Right lobe of liver (tissue), 6 donors: ENCODE measurements at regions of chr12 and their contacts with region 1.

Region 1: DNA sequence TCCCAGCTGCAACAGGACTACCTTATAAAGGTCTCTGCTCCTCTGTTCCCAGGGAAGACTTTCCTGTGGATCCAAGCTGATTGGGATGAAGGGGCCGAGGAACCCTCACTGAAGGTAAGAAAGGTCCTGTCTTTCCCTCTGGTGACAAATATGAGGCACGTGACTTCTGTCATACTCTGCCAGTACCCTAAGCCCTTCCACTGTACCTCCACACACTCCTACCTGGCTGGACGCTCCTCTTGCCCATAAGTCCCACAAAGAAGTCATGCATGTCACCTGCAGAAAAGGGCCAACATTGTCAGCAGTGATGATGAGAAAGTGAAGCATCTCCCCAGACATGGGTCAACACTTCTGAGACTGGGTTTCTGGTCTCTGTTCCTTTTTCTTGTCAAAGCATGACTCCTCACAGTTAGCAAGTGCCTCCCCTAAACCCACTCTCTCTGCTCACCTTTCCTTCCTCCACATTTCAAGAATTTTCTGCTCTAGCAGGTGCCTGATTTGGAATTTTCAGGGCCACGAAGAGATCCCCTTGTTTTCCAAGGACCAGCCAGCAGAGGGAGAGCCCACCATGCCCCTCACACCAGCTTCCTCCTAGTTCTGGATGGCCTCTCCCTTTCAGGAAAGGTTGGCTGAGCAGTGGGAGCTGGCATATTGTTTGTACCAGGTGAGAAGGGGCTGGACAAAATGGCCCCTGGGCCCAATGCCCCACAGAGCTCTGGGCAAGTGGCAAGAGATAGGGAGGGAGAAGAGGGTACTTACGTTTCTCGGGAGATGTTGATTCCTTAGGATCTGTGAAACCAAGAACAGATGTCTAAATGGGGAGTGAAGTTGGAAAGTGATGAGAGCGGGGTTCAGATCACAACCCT is 3.5 kb downstream of the TAC3 start:
- DNase-seq: no peak
- ATAC-seq: no peak
- H3K4me3 ChIP-seq: no peak overlapping the region
- H3K27ac ChIP-seq: no peak overlapping the region
- H3K4me1 ChIP-seq: peaks cover 0 to 9% (median 0%) of the 10 kb centered on the region in 4 donors
- H3K27me3 ChIP-seq: no peaks in the 10 kb centered on the region
- CTCF ChIP-seq: no peak
- POLR2A ChIP-seq: no peak

Region 2: DNA sequence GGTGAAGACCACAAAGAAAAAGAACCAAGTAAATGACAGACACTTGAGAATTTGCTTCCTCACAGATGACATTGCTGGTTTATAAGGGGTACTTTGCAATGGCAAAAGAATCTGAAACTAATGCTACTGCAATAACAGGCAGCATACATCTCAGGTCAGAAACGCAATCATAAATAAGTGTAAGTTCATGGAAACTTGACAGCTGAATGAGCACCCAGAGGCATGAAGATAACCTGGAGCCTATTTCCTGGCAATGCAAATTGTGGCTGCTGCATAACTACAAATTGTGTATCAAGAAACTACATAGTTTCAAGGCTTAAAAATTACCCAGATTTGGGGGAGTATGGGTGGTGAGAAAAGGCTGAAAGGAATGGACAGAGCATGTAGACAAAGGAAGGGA is 45.6 kb after region 1 on chr12:
- intact Hi-C with region 1: loop called in 1 of 2 experiments (anchors 5 kb)
- DNase-seq: no peak
- ATAC-seq: no peak
- H3K4me3 ChIP-seq: no peak overlapping the region
- H3K27ac ChIP-seq: no peak overlapping the region
- H3K4me1 ChIP-seq: no peaks in the 10 kb centered on the region
- H3K27me3 ChIP-seq: no peaks in the 10 kb centered on the region
- CTCF ChIP-seq: no peak
- POLR2A ChIP-seq: no peak

Region 3: DNA sequence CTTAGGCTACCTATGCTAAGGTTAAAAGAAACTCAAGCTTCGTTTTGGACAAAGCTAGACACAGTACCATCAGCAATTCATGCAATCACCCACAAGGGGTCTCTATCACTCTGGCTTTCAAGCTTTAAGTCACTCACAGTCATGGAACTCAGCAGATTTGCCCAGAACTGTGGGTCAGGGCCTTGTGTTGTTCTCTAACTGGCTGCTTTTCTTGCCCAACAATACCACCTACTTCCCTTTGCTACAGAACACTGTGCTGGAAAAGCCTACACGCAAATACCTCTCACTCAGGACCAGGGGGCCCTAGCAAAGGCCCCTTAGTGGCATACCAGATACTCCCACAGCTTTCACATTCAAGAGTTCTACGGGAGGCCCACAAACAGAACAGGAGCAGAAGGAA is 56.7 kb after region 1 on chr12:
- intact Hi-C with region 1: loop called in 1 of 2 experiments (anchors 5 kb)
- DNase-seq: peak in 2 of 3 donors; percentile 37 to 75
- ATAC-seq: peak; percentile 98 to 99 (median 98)
- H3K4me3 ChIP-seq: no peak overlapping the region
- H3K27ac ChIP-seq: peak overlapping the region; percentile 52 to 70 (median 70)
- H3K4me1 ChIP-seq: peaks cover 0 to 9% (median 0%) of the 10 kb centered on the region in 4 donors
- H3K27me3 ChIP-seq: no peaks in the 10 kb centered on the region
- CTCF ChIP-seq: peak; percentile 87 to 97 (median 93)
- POLR2A ChIP-seq: no peak

Region 4: DNA sequence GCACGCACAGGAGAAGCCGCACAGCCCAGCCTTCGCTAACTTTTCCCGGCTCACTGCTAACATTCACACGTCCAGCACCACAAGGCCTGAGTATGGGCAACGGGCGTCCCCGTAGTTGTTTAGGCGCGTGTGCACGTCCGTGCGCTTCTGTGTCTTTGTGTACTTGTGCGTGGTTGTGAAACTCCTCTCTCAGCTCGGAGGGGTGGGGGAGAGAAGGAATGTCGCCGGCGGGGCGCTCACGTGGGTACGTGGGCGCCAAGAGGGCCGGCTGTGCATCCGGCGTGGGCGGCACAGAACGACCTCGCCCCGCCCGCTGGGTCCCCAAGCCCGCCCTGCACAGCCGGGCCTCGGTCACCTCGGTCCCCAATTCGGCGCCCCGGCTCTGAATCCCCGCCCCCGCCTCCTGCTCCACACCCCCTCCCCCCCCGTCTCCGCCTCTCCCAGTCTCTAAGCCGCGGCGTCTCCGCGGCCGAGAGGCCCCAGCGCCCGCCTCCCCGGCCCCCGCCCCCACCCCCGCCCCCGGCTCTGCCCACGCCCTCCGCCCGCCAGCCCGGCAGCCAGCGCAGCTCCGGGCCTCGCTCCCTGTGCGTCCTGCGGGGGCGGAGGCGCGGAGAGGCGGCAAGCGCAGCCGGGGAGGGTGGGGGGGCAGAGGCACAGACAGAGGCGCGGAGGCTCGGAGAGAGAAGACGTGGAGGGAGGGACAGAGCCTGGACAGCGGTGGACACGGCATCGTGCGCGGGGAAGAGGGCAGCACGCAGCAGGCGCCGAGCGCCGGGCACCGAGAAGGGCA is 75.8 kb after region 1 on chr12 and contains the start of gene NAB2:
- intact Hi-C with region 1: no loop called
- DNase-seq: peak; percentile 98 to 99 (median 99)
- ATAC-seq: peak; percentile 70 to 86 (median 81)
- H3K4me3 ChIP-seq: peak within 1 kb of the TSS; percentile 80 to 93 (median 92)
- H3K27ac ChIP-seq: peak within 1 kb of the TSS; percentile 96 to 98 (median 98)
- H3K4me1 ChIP-seq: peaks cover 0 to 20% (median 10%) of the 10 kb centered on the region in 4 donors
- H3K27me3 ChIP-seq: no peaks in the 10 kb centered on the region
- CTCF ChIP-seq: no peak
- POLR2A ChIP-seq: peak; percentile 67
- total RNA-seq, gene NAB2: 6.1 to 13.1 (median 8.9) TPM

Region 5: DNA sequence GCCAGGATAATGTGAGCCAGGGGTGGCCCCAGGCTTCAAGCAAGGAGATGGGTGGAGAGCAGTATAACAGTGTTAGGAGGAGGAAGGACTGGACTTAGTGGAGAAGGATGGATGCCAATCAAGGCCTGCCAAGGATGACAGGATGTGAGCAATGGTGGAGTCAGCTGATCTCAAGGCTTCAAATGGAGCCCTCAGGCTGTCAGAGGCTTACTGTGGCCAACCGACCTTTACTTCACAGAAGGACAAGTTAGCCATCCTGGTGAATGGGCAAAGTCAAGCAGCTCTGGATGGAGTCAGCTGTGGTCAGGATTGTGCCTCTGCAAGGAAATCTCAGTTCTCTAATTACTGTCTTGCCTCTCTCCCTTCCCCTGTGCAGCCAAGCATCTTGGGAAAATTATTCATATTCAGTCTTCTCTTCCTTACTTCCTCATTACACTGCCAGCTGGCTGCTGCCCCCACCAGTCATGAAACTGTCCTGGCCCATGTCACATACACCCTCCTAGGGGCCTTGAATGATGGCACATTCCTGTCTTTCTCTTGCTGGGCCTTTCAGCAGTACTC is 106.0 kb after region 1 on chr12:
- intact Hi-C with region 1: loop called in 1 of 2 experiments (anchors 5 kb)
- DNase-seq: no peak
- ATAC-seq: peak; percentile 55 to 72 (median 64)
- H3K4me3 ChIP-seq: no peak overlapping the region
- H3K27ac ChIP-seq: no peak overlapping the region
- H3K4me1 ChIP-seq: no peaks in the 10 kb centered on the region
- H3K27me3 ChIP-seq: no peaks in the 10 kb centered on the region
- CTCF ChIP-seq: no peak
- POLR2A ChIP-seq: no peak

Region 6: GRCh38 chr12:57261428-57261865 is 248.6 kb after region 1 on chr12:
- intact Hi-C with region 1: no loop called
- DNase-seq: no peak
- ATAC-seq: peak in 3 of 4 donors; percentile 4 to 34 (median 5)
- H3K4me3 ChIP-seq: no peak overlapping the region
- H3K27ac ChIP-seq: peak overlapping the region; percentile 82 to 88 (median 87)
- H3K4me1 ChIP-seq: peaks cover 0 to 65% (median 36%) of the 10 kb centered on the region in 4 donors
- H3K27me3 ChIP-seq: no peaks in the 10 kb centered on the region
- CTCF ChIP-seq: no peak
- POLR2A ChIP-seq: no peak